ENCODE measurements at regions of chr1 and their contacts with region 1.

Region 1: GRCh38 chr1:12019858-12020509 is 686 bp downstream of the MIIP start:
- DNase-seq: no peak
- H3K4me3 ChIP-seq: peak overlapping the region; percentile 85
- CTCF ChIP-seq: no peak

Region 2: DNA sequence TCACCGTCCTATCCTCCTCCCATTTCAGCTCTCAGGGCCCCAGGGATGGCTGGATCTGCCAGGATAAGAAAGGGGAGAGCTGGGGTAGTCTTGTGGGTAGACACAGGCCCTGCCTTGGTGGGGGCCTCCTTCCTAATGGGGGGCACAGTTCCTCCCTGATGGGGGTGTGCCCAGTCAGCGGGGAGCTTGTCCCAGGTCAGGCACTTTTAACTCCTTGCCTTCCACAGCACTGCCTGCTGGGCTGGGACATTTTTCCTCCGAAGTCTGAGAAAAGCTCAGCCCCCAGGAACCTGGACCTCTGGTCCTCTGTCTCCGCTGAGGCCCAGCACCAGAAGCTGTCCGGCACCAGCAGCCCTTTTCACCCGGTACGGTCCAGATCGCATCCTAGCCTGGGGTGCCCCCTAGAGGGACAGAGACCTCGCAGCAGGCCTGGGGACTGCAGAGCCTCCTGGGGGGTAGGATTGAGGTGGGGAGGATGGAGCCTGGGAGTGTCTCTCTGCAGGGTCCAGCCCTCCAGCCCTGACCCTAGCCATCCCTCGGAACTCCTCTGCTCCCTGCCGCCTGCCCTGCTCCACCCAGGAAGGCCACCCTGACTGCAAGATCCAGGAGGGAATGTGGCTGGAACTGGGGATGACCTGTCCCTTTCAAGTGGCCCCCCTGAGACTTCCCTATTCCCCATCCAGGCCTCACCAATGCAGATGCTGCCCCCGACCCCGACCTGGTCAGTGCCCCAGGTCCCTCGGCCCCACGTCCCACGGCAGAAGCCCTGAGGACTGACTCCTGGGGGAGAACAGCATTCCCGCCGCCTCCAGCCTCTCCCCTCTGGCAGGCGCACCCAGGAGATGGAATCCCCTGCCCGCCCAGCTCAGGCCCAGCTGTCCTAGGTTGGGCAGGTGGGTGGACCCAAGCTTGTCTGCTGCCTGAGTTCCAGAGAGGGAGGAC is 11.3 kb after region 1 on chr1:
- CTCF ChIA-PET with region 1: interaction called, 12 read pairs
- POLR2A ChIA-PET with region 1: interaction called, 7 read pairs
- DNase-seq: no peak
- H3K4me3 ChIP-seq: no peak overlapping the region
- CTCF ChIP-seq: peak; percentile 68

Region 3: DNA sequence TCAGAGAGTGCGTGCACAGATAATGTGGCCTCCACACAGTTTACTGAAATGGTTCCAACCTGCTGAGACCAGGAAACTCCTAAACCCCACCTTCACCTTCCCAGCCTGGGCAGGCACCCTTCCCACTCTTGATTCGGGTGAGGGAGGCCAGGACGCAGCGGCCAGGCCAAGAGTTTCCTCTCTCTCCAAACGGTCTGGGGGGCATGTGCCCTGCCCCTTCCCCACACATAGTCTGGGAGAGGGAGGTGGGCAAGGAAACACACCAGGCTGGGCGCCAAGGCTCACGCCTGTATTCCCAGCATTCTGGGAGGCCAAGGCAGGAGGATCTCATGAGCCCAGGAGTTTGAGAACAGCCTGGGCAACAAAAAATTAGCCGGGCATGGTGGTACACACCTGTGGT is 52.8 kb after region 1 on chr1:
- CTCF ChIA-PET with region 1: no interaction called
- POLR2A ChIA-PET with region 1: no interaction called
- DNase-seq: no peak
- H3K4me3 ChIP-seq: no peak overlapping the region
- CTCF ChIP-seq: no peak